Upper lobe of right lung (tissue), 1 donor: ENCODE measurements at regions of chr5 and their contacts with region 1.

Region 1: GRCh38 chr5:52948418-52949076 is 40.6 kb upstream of the ITGA2 start:
- DNase-seq: no peak
- ATAC-seq: peak; percentile 98
- H3K4me3 ChIP-seq: no peak overlapping the region
- H3K27ac ChIP-seq: no peak overlapping the region
- H3K4me1 ChIP-seq: peaks cover 9% of the 10 kb centered on the region
- H3K27me3 ChIP-seq: no peaks in the 10 kb centered on the region
- CTCF ChIP-seq: peak; percentile 81

Region 2: GRCh38 chr5:53095931-53096525 is 147.5 kb after region 1 on chr5:
- intact Hi-C with region 1: loop called (anchors 5 kb)
- DNase-seq: no peak
- ATAC-seq: peak; percentile 95
- H3K4me3 ChIP-seq: no peak overlapping the region
- H3K27ac ChIP-seq: no peak overlapping the region
- H3K4me1 ChIP-seq: no peaks in the 10 kb centered on the region
- H3K27me3 ChIP-seq: no peaks in the 10 kb centered on the region
- CTCF ChIP-seq: peak; percentile 94